Gastrocnemius medialis (tissue), 4 donors: ENCODE measurements at regions of chr2 and their contacts with region 1.

Region 1: GRCh38 chr2:237744613-237745249 is 53.8 kb upstream of the RBM44 start:
- DNase-seq: peak; percentile 46 to 66
- ATAC-seq: peak; percentile 55 to 75
- H3K4me3 ChIP-seq: no peak overlapping the region
- H3K27ac ChIP-seq: peak overlapping the region; percentile 56 to 80 (median 66)
- H3K4me1 ChIP-seq: peaks cover 51% of the 10 kb centered on the region in 2 donors
- H3K27me3 ChIP-seq: no peaks in the 10 kb centered on the region
- CTCF ChIP-seq: peak; percentile 96 to 100 (median 97)
- POLR2A ChIP-seq: no peak

Region 2: DNA sequence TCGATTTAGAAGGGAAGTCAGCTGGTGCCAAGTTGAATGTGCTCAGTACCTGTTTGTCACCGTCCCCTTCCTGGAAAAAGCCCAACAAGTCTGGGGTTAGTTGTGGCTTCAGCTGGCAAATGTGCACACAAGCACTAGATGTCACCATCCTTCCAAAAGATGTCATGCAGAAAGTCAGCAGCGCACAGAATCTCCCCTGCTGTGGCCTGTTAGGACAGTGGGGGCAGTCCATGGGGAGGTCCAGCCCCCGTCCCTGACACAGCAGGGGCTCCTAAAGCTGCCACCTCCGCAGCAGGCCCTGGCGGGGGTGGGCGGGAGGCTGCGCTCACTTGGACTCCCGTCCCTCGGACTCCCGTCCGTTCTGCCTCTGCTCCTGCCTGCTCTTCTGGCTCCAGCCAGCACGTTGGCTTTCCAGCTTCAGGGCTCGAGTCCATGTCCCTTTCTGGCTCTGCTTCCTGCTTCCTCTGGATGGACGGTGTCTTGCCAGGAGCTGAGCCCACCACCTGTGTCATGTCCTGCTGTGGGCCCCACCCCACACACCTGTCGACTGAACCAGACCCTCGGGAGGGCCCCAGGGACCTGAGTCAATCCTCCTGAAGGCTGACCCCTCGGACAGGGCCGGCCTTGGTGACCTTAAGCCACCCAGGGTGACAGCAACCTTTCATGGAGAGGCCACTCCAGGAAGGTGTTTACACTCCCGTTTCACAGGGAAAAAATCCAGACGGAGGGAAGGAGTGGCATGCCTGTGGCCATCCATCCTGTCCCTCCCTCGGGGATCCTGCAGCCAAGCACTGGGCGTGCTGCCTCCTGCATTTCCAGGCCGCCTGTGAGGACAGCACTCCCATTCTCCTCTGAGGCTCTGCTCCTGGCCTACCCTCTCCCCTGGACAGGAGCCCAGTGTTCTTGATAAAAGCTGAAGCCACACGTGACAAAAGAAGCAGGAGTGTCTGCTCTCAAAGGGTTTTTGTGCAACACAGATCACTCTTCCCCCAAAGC is 162.7 kb before region 1 on chr2:
- in situ Hi-C with region 1: loop called in 1 of 4 experiments (anchors 10 kb)
- intact Hi-C with region 1: loop called (anchors 1 kb)
- DNase-seq: peak; percentile 54 to 76
- ATAC-seq: peak; percentile 90 to 93
- H3K4me3 ChIP-seq: peak overlapping the region; percentile 38 to 51 (median 39)
- H3K27ac ChIP-seq: peak overlapping the region; percentile 51 to 75 (median 68)
- H3K4me1 ChIP-seq: peaks cover 12 to 14% of the 10 kb centered on the region in 2 donors
- H3K27me3 ChIP-seq: no peaks in the 10 kb centered on the region
- CTCF ChIP-seq: peak in 4 of 5 experiments; percentile 27 to 56 (median 46)
- POLR2A ChIP-seq: no peak

Region 3: GRCh38 chr2:237596520-237596860 is 148.2 kb before region 1 on chr2:
- in situ Hi-C with region 1: loop called in 3 of 4 experiments (anchors 5 to 10 kb)
- intact Hi-C with region 1: loop called (anchors 1 kb)
- DNase-seq: no peak
- ATAC-seq: no peak
- H3K4me3 ChIP-seq: no peak overlapping the region
- H3K27ac ChIP-seq: no peak overlapping the region
- H3K4me1 ChIP-seq: peaks cover 22 to 26% of the 10 kb centered on the region in 2 donors
- H3K27me3 ChIP-seq: no peaks in the 10 kb centered on the region
- CTCF ChIP-seq: no peak
- POLR2A ChIP-seq: no peak

Region 4: DNA sequence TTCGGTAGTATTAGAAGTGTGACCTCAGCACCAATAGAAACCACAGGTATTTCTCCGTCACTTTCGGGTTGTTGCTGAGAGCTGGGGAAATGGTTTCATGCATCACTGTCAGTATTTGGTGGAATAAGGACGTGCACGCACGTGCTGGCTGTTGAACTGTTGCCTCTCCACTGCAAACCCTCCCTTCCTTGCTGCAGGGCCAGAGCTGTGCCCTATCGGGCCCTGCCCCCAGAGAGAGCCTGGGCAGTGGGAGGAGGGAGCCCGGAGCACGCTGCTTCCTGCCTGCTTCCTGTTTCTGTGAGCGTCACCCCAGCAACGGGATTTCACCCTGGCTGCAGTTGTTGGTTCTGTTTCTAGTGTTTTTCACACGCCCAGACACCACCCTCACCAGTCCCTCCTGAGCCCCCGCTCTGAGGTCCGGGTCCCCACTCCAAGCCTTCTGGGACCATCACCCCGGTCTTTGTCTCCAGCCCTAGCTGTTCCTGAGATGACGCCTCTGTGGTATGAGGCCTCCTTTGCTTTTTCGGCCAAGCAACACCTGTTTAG is 69.9 kb before region 1 on chr2:
- in situ Hi-C with region 1: loop called (anchors 5 to 10 kb)
- intact Hi-C with region 1: loop called (anchors 1 kb)
- DNase-seq: peak in 1 of 2 donors; percentile 78
- ATAC-seq: peak; percentile 30 to 41
- H3K4me3 ChIP-seq: peak overlapping the region; percentile 34 to 44 (median 39)
- H3K27ac ChIP-seq: peak overlapping the region; percentile 76 to 85 (median 84)
- H3K4me1 ChIP-seq: peaks cover 81 to 83% of the 10 kb centered on the region in 2 donors
- H3K27me3 ChIP-seq: no peaks in the 10 kb centered on the region
- CTCF ChIP-seq: peak in 3 of 5 experiments; percentile 17 to 35 (median 34)
- POLR2A ChIP-seq: peak in 1 of 2 donors; percentile 13